Mammary epithelial cell (primary cell): ENCODE measurements at regions of chr9 and their contacts with region 1.

Region 1: GRCh38 chr9:104780799-104781395 is 17.0 kb downstream of the NIPSNAP3B start:
- DNase-seq: peak; percentile 43
- H3K4me3 ChIP-seq: no peak overlapping the region
- H3K27ac ChIP-seq: no peak overlapping the region
- H3K4me1 ChIP-seq: peaks cover 7% of the 10 kb centered on the region
- H3K27me3 ChIP-seq: no peaks in the 10 kb centered on the region
- CTCF ChIP-seq: peak; percentile 50 to 53

Region 2: DNA sequence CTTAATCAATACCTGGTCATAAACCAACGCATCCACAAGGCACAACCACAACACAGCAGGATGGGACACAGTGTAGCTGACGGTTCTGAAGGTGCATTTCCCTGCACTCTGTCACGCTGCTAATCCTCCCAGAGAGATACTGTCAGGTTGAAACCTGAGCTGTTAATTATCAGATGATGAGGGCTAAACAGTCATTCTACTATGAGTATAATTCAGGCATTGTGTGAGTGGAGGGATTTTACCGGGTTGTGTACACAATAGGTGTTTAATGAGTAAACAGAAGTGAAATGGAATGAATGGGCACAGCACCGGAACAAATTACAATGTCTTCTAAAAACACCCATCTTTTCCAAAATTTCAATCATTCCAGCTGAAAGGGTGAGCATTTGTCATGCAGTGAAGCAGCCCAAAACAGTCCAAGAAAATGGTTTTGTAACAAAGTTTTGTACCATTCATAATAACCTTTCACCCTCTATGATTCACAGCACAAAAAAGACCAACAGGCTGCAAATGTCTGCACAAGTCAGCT is 75.6 kb after region 1 on chr9:
- CTCF ChIA-PET with region 1: no interaction called
- dilution Hi-C with region 1: no loop called
- in situ Hi-C with region 1: no loop called
- intact Hi-C with region 1: loop called (anchors 5 kb)
- DNase-seq: no peak
- H3K4me3 ChIP-seq: no peak overlapping the region
- H3K27ac ChIP-seq: no peak overlapping the region
- H3K4me1 ChIP-seq: peaks cover 15% of the 10 kb centered on the region
- H3K27me3 ChIP-seq: no peaks in the 10 kb centered on the region
- CTCF ChIP-seq: no peak

Region 3: GRCh38 chr9:105168870-105169319 is 388.0 kb after region 1 on chr9:
- CTCF ChIA-PET with region 1: no interaction called
- dilution Hi-C with region 1: no loop called
- in situ Hi-C with region 1: loop called in 1 of 2 experiments (anchors 10 kb)
- intact Hi-C with region 1: no loop called
- DNase-seq: no peak
- H3K4me3 ChIP-seq: no peak overlapping the region
- H3K27ac ChIP-seq: no peak overlapping the region
- H3K4me1 ChIP-seq: no peaks in the 10 kb centered on the region
- H3K27me3 ChIP-seq: no peaks in the 10 kb centered on the region
- CTCF ChIP-seq: no peak

Region 4: GRCh38 chr9:105414947-105415661 is 634.2 kb after region 1 on chr9:
- CTCF ChIA-PET with region 1: no interaction called
- dilution Hi-C with region 1: no loop called
- in situ Hi-C with region 1: no loop called
- intact Hi-C with region 1: loop called (anchors 10 kb)
- DNase-seq: peak; percentile 22
- H3K4me3 ChIP-seq: no peak overlapping the region
- H3K27ac ChIP-seq: no peak overlapping the region
- H3K4me1 ChIP-seq: no peaks in the 10 kb centered on the region
- H3K27me3 ChIP-seq: no peaks in the 10 kb centered on the region
- CTCF ChIP-seq: peak; percentile 71 to 86